Activated naive CD8-positive, alpha-beta T cell treated with anti-CD3 and anti-CD28 coated beads, Interleukin-2, amount 10 ng/mL, durations not matched to agents 7 days and 5 days (primary cell): ENCODE measurements at regions of chr9 and their contacts with region 1.

Region 1: GRCh38 chr9:32526041-32526706 is at the start of gene RIGI:
- DNase-seq: peak; percentile 77
- ATAC-seq: peak; percentile 74
- H3K4me3 Mint-ChIP-seq: peak within 1 kb of the TSS; percentile 96
- H3K27ac Mint-ChIP-seq: peak within 1 kb of the TSS; percentile 90
- H3K4me1 Mint-ChIP-seq: peaks cover 39% of the 10 kb centered on the region
- H3K27me3 Mint-ChIP-seq: no peaks in the 10 kb centered on the region
- total RNA-seq, gene RIGI: 27.8 to 30.0 TPM

Region 2: GRCh38 chr9:32384364-32385151 is 141.6 kb before region 1 on chr9 and contains the start of gene ACO1:
- POLR2A ChIA-PET with region 1: interaction called, 10 read pairs
- DNase-seq: peak; percentile 95
- ATAC-seq: peak; percentile 89
- H3K4me3 Mint-ChIP-seq: peak within 1 kb of the TSS; percentile 87
- H3K27ac Mint-ChIP-seq: peak within 1 kb of the TSS; percentile 40
- H3K4me1 Mint-ChIP-seq: peaks cover 17% of the 10 kb centered on the region
- H3K27me3 Mint-ChIP-seq: peaks cover 28% of the 10 kb centered on the region
- total RNA-seq, gene ACO1: 8.5 to 9.1 TPM

Region 3: DNA sequence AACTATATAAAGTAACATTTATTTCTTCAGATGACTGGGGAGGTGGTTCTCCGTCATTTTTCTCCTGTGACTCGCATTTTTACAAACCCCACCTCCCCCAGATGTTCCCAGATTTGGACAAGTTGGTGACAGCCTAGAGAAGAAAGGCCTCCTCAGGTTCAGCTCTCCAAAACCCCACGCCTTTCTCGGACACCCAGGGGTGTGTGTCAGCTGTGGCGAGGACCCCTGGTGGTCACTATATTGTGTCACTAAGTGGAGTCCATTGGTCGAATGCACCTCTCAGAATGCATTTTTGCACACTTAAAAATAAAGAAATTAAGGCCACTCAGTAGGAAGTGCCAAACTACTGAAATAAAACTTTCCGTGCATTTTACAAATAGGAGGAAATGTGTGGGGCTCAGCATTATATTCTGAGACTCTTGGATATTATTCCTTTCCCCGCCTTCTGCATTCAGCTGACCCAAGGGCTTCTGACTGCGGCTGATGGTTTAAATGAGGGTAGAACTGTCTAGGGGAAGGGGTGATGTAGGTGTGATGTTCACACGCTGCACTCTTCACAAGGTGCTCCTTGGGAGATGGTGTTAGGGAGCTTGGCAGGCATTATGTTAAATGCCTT is 94.1 kb before region 1 on chr9:
- POLR2A ChIA-PET with region 1: no interaction called
- DNase-seq: no peak
- ATAC-seq: no peak
- H3K4me3 Mint-ChIP-seq: no peak overlapping the region
- H3K27ac Mint-ChIP-seq: no peak overlapping the region
- H3K4me1 Mint-ChIP-seq: peaks cover 6% of the 10 kb centered on the region
- H3K27me3 Mint-ChIP-seq: no peaks in the 10 kb centered on the region

Region 4: GRCh38 chr9:32550562-32551433 is 24.6 kb after region 1 on chr9:
- POLR2A ChIA-PET with region 1: interaction called, 47 read pairs
- DNase-seq: peak; percentile 94
- ATAC-seq: peak; percentile 77
- H3K4me3 Mint-ChIP-seq: peak overlapping the region; percentile 98
- H3K27ac Mint-ChIP-seq: peak overlapping the region; percentile 92
- H3K4me1 Mint-ChIP-seq: peaks cover 28% of the 10 kb centered on the region
- H3K27me3 Mint-ChIP-seq: no peaks in the 10 kb centered on the region

Region 5: GRCh38 chr9:32571969-32572899 is 46.1 kb after region 1 on chr9:
- POLR2A ChIA-PET with region 1: interaction called, 11 read pairs
- DNase-seq: peak; percentile 45
- ATAC-seq: peak; percentile 84
- H3K4me3 Mint-ChIP-seq: peak overlapping the region; percentile 99
- H3K27ac Mint-ChIP-seq: peak overlapping the region; percentile 100
- H3K4me1 Mint-ChIP-seq: peaks cover 18% of the 10 kb centered on the region
- H3K27me3 Mint-ChIP-seq: no peaks in the 10 kb centered on the region